CD4-positive, alpha-beta T cell (primary cell): ENCODE measurements at regions of chr12 and their contacts with region 1.

Region 1: DNA sequence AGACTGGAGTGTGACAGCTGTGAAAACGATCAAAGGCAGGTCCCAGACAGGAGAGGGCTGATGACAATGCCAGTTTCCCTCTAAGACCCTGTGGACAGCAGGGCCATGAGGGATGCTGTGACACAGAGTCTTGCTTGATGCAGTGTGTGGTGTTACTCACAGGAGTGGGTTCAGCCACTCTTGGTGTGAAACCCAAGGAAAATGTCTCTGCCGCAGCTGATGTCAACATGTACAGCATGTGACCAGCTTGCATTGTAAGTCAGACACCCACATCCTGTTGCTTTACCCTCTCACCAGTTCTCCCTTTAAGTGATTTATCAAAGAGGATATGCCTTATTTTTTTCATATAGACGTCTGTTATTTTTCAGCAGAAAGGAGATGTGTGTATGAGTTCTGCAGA is 268.6 kb downstream of the BTG1 start:
- DNase-seq: peak; percentile 71 to 98 (median 82)
- ATAC-seq: peak; percentile 90
- H3K4me3 ChIP-seq: peak overlapping the region; percentile 30
- H3K4me3 Mint-ChIP-seq: peak overlapping the region; percentile 73
- H3K27ac ChIP-seq: peak overlapping the region; percentile 92 to 97
- H3K27ac Mint-ChIP-seq: peak overlapping the region; percentile 98
- H3K4me1 ChIP-seq: peaks cover 44% of the 10 kb centered on the region
- H3K4me1 Mint-ChIP-seq: peaks cover 67% of the 10 kb centered on the region
- H3K27me3 ChIP-seq: no peaks in the 10 kb centered on the region
- H3K27me3 Mint-ChIP-seq: no peaks in the 10 kb centered on the region
- CTCF ChIP-seq: no peak

Region 2: GRCh38 chr12:91382081-91382543 is 494.9 kb before region 1 on chr12:
- CTCF ChIA-PET with region 1: interaction called, 7 read pairs
- POLR2A ChIA-PET with region 1: interaction called, 3 read pairs
- intact Hi-C with region 1: loop called in 1 of 2 experiments (anchors 10 kb)
- DNase-seq: peak; percentile 77 to 94 (median 86)
- ATAC-seq: peak; percentile 89
- H3K4me3 ChIP-seq: peak overlapping the region; percentile 21
- H3K4me3 Mint-ChIP-seq: peak overlapping the region; percentile 81
- H3K27ac ChIP-seq: no peak overlapping the region
- H3K27ac Mint-ChIP-seq: peak overlapping the region; percentile 1
- H3K4me1 ChIP-seq: peaks cover 7% of the 10 kb centered on the region
- H3K4me1 Mint-ChIP-seq: peaks cover 5% of the 10 kb centered on the region
- H3K27me3 ChIP-seq: peaks cover 0 to 5% of the 10 kb centered on the region in 2 experiments
- H3K27me3 Mint-ChIP-seq: peaks cover 4% of the 10 kb centered on the region
- CTCF ChIP-seq: peak; percentile 90

Region 3: GRCh38 chr12:91778938-91779400 is 98.1 kb before region 1 on chr12:
- CTCF ChIA-PET with region 1: no interaction called
- POLR2A ChIA-PET with region 1: interaction called, 32 read pairs
- intact Hi-C with region 1: loop called in 1 of 2 experiments (anchors 10 kb)
- DNase-seq: peak; percentile 3 to 75 (median 31)
- ATAC-seq: peak; percentile 75
- H3K4me3 ChIP-seq: peak overlapping the region; percentile 30
- H3K4me3 Mint-ChIP-seq: peak overlapping the region; percentile 78
- H3K27ac ChIP-seq: peak overlapping the region; percentile 67 to 72
- H3K27ac Mint-ChIP-seq: peak overlapping the region; percentile 87
- H3K4me1 ChIP-seq: peaks cover 5% of the 10 kb centered on the region
- H3K4me1 Mint-ChIP-seq: peaks cover 57% of the 10 kb centered on the region
- H3K27me3 ChIP-seq: no peaks in the 10 kb centered on the region
- H3K27me3 Mint-ChIP-seq: no peaks in the 10 kb centered on the region
- CTCF ChIP-seq: no peak

Region 4: DNA sequence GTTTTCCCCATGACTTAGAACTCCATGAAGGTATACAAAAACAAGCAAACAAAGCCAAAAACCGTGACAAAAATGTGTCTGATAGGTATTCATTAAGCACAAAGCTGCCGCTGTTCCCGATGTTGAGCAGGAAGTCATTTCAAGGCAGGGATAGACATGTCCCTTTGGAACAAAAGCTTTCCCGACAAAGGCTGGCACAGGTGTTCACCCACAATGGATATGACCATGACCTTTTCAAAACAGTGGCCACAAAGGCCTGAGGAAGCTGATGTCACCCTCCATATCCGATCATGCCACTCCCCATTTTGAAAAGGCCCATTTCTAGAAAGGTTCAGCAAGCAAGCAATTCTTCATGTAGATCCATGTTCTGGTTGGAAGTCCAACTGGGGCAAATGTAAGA is 10.5 kb before region 1 on chr12:
- CTCF ChIA-PET with region 1: no interaction called
- POLR2A ChIA-PET with region 1: interaction called, 19 read pairs
- intact Hi-C with region 1: no loop called
- DNase-seq: no peak
- ATAC-seq: no peak
- H3K4me3 ChIP-seq: no peak overlapping the region
- H3K4me3 Mint-ChIP-seq: no peak overlapping the region
- H3K27ac ChIP-seq: no peak overlapping the region
- H3K27ac Mint-ChIP-seq: no peak overlapping the region
- H3K4me1 ChIP-seq: peaks cover 19% of the 10 kb centered on the region
- H3K4me1 Mint-ChIP-seq: peaks cover 73% of the 10 kb centered on the region
- H3K27me3 ChIP-seq: no peaks in the 10 kb centered on the region
- H3K27me3 Mint-ChIP-seq: no peaks in the 10 kb centered on the region
- CTCF ChIP-seq: no peak

Region 5: DNA sequence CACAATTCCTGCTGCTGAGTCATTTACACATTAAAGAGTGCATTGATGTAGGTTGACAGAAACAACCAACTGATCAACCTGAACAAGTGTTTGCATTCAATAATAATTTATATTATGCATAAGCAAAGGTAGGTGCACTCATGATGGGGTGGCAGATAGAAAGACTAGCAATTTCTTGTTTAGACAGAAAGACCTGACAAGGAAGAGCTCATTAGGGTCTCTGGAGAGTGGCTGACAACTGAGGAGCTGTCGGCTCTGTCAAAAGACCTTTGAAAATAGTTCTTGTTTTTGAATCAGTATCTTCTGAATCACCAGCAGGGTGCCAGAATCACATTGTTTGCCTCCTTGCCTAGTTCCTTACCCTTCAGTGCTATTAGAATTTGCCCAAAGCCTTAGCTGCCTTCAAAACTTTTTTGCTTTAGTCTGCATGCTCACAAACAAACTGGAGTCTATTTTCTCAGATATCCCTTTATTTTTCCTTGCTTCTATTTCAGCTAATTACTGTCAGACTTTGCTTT is 33.9 kb after region 1 on chr12:
- CTCF ChIA-PET with region 1: no interaction called
- POLR2A ChIA-PET with region 1: no interaction called
- intact Hi-C with region 1: loop called in 1 of 2 experiments (anchors 5 kb)
- DNase-seq: peak in 3 of 14 experiments; percentile 27 to 28 (median 28)
- ATAC-seq: no peak
- H3K4me3 ChIP-seq: no peak overlapping the region
- H3K4me3 Mint-ChIP-seq: no peak overlapping the region
- H3K27ac ChIP-seq: no peak overlapping the region
- H3K27ac Mint-ChIP-seq: peak overlapping the region; percentile 57
- H3K4me1 ChIP-seq: no peaks in the 10 kb centered on the region
- H3K4me1 Mint-ChIP-seq: peaks cover 14% of the 10 kb centered on the region
- H3K27me3 ChIP-seq: no peaks in the 10 kb centered on the region
- H3K27me3 Mint-ChIP-seq: no peaks in the 10 kb centered on the region
- CTCF ChIP-seq: no peak

Region 6: DNA sequence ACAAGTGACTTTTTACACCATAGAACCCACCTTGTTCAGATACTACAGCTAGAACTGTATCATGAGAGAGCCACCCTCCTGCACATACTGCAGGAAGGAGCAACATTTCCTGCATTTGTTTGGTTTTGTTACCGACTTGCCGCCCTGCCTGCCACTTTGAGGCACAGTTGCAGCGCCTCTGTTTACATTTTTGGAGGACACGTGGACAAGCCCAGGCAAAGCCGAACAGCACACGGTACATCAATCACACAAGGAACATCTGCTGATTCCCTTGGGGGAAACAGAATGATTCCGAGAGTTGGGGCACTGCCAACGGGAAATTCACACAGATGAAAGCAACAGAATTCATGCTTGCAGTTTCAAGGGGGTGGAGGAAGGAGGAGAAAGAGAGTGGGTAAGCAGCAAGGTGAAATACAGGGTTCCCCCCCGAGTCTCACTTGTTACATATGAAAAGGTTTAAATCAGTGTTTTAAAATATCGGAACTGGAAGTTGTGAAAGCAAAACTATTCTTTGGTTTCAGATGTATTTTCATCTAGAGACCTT is 157.9 kb after region 1 on chr12:
- CTCF ChIA-PET with region 1: interaction called, 3 read pairs
- POLR2A ChIA-PET with region 1: interaction called, 27 read pairs
- intact Hi-C with region 1: loop called (anchors 2 to 10 kb)
- DNase-seq: peak; percentile 26 to 84 (median 58)
- ATAC-seq: peak; percentile 53
- H3K4me3 ChIP-seq: peak overlapping the region; percentile 54
- H3K4me3 Mint-ChIP-seq: peak overlapping the region; percentile 89
- H3K27ac ChIP-seq: peak overlapping the region; percentile 66 to 67
- H3K27ac Mint-ChIP-seq: peak overlapping the region; percentile 96
- H3K4me1 ChIP-seq: peaks cover 79% of the 10 kb centered on the region
- H3K4me1 Mint-ChIP-seq: peaks cover 95% of the 10 kb centered on the region
- H3K27me3 ChIP-seq: no peaks in the 10 kb centered on the region
- H3K27me3 Mint-ChIP-seq: no peaks in the 10 kb centered on the region
- CTCF ChIP-seq: no peak

Region 7: GRCh38 chr12:92408072-92408900 is 531.3 kb after region 1 on chr12:
- CTCF ChIA-PET with region 1: no interaction called
- POLR2A ChIA-PET with region 1: interaction called, 4 read pairs
- intact Hi-C with region 1: loop called in 1 of 2 experiments (anchors 5 kb)
- DNase-seq: peak in 7 of 14 experiments; percentile 21 to 76 (median 59)
- ATAC-seq: no peak
- H3K4me3 ChIP-seq: no peak overlapping the region
- H3K4me3 Mint-ChIP-seq: peak overlapping the region; percentile 9
- H3K27ac ChIP-seq: no peak overlapping the region
- H3K27ac Mint-ChIP-seq: peak overlapping the region; percentile 40
- H3K4me1 ChIP-seq: peaks cover 43% of the 10 kb centered on the region
- H3K4me1 Mint-ChIP-seq: peaks cover 73% of the 10 kb centered on the region
- H3K27me3 ChIP-seq: no peaks in the 10 kb centered on the region
- H3K27me3 Mint-ChIP-seq: no peaks in the 10 kb centered on the region
- CTCF ChIP-seq: no peak